ENCODE measurements at regions of chr1 and their contacts with region 1.

Region 1: DNA sequence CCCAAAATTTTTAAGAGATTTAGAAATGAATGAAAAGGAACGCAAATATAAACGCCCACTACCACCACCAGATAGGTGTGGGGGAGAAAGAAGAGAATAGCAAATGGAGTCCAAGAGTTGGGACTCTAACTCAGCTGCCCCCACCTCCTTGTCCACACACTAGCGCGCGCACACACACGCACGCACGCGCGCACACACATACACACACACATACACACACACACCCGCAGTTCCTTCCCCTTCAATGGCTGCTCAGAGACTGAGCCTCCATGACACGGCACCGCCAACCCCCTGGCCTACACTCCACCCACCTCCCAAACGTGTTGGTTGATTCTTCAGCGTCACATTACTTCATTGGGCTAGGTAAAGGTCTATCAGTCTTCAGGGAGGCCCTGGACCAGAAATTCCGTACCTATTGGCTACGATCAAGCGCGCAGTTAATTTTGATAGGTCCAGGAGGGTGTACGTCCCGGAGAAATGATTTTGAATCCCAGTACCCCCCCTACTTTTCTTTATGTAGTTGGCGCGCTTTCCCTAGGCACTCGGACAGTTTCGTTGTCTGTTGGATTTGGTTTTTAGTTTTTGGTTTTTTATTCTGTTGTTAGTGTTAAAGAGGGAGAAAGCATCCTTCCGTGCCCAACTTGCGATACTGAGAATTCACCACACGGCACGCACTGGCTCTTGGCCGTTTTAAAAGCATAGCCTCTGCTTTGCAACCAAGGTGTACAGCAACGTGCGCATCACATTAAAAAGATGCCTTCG is at the start of gene ANP32E:
- DNase-seq: peak; percentile 98
- H3K4me3 ChIP-seq: peak within 1 kb of the TSS; percentile 67
- H3K27me3 ChIP-seq: no peaks in the 10 kb centered on the region
- CTCF ChIP-seq: 0 out of 2 replicates have a peak, but pooled peaks have one; percentile 13
- polyA plus RNA-seq, gene ANP32E: 6.1 and 14.8 TPM in 2 replicates

Region 2: DNA sequence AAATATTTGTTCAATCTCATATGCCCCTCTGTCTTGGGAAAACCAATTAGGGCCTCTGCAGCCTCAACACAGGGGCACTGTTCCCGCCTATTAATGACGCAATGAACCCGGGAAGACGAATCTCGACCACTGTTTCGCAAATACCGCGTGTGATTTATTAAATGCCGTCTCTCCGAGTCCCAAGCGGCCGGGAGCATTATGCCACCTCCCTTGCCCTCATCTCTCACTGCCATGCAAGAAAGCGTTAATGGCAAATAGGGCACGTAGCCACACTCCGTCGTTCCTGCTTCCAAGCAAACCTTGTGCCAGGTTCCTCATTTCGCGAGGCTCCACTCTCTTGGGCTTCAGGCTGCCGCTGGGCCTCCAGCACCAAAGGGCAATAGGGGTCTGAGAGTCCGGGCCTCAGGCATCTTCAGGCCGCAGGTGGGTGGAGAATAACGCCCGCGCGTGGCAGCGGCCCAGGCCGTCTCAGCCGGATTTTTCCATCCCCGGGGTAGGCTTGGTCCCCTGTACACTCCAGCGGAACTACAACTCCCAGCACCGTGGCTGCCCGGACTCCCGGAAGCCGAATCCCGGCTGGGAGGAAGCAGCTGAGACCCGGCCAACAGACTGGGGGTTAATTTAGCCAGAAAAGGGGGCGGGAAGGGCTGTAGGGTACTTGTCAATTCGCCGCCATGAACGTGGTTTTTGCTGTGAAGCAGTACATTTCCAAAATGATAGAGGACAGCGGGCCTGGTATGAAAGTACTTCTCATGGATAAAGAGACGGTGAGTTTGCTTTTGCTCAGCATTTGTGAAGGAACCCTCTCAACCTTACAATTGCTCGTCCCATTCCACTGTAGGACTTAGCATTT is 168.6 kb before region 1 on chr1 and contains the start of gene VPS45:
- CTCF ChIA-PET with region 1: no interaction called
- POLR2A ChIA-PET with region 1: no interaction called
- DNase-seq: peak; percentile 47
- H3K4me3 ChIP-seq: peak within 1 kb of the TSS; percentile 59
- H3K27me3 ChIP-seq: no peaks in the 10 kb centered on the region
- CTCF ChIP-seq: no peak
- polyA plus RNA-seq, gene VPS45: 29.0 and 47.0 TPM in 2 replicates

Region 3: GRCh38 chr1:150221552-150221951 is 14.5 kb before region 1 on chr1:
- CTCF ChIA-PET with region 1: interaction called, 10 read pairs
- POLR2A ChIA-PET with region 1: no interaction called
- DNase-seq: no peak
- H3K4me3 ChIP-seq: no peak overlapping the region
- H3K27me3 ChIP-seq: no peaks in the 10 kb centered on the region
- CTCF ChIP-seq: peak; percentile 56